ENCODE measurements at regions of chr2 and their contacts with region 1.

Region 1: DNA sequence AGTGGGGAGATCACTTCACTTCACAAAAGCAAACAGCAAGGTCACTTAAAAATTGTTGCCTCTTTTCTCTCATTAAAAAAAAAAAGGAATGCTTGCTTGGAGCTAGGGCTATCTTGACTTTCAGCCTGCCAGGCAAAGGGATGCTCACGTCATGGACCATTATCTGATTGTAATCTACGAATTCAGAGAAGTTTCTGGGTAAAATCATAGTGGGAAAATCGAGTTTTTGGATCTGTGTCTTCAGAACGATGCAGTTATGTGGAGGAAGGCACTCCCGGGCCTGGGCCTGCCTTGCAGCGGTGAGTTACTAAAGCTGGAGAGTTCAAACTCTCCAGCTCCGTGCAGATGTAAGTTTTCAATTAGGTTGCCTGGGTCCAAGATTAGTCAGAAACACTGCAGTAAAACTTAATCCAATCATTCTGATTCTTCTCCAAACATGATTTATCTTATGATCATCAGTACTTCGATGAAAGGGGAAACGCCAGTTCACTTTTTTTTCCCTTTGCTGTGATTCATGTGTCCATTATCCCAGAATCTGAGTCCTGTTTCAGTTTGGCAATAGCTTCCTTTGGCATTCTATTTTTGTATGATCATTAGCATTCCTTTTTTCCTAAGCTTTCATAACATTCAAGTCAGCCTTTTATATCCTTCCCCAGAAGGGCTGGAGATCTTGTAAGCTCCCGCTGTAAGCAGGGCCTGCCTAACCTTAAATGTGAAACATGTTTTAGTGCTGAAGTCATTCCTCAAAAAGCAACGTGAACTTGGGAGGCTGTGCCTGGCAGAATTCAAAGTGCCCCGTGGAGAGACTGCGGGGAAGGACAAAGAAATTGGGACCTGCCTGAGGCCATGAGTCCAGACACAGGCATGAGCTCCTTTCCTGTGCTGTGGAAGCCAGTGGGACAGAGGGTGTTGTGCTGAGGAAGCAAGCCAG is 119.3 kb upstream of the TWIST2 start:
- DNase-seq: peak; percentile 46 to 90
- H3K4me3 ChIP-seq: peak overlapping the region in 1 of 2 donors; percentile 28
- H3K27ac ChIP-seq: peak overlapping the region; percentile 97 to 98
- H3K4me1 ChIP-seq: peaks cover 4 to 36% of the 10 kb centered on the region in 2 donors
- H3K27me3 ChIP-seq: no peaks in the 10 kb centered on the region
- CTCF ChIP-seq: no peak

Region 2: DNA sequence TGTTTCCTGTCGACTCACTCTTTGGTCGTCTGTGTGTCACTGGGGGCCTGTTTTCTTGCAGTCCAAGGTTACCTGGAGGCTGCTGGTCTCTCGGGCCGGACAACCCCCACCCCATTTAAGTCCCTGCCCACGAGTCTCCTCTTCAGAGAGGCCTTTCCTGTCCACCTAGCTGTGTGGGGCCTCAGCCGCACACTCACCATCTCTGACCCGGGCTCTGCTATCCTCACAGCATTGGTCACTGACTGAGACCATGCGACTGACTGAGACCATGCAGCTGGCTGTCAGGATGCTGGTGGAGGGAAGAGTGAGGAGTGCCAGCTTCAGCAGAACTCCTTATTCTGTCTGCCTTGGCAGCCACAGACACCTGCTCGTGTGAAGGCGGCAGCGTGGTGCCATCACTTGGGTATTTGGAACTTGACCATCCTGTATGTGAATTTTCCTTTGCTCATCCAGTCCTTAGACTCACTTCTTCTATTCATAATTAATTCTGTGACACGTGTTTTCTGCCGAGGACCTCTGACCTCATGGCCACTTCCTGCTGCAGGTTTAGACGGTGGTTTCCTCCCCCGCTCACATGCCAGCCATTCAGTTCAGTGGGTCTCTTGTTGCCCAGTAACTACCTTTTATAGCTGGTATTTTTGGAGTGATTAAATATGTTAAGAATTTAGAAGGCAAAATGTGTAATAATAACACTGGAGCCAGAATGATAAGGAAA is 349.3 kb before region 1 on chr2:
- intact Hi-C with region 1: loop called (anchors 5 kb)
- DNase-seq: peak in 1 of 2 donors; percentile 79
- H3K4me3 ChIP-seq: no peak overlapping the region
- H3K27ac ChIP-seq: peak overlapping the region; percentile 55 to 84
- H3K4me1 ChIP-seq: peaks cover 12 to 28% of the 10 kb centered on the region in 2 donors
- H3K27me3 ChIP-seq: no peaks in the 10 kb centered on the region
- CTCF ChIP-seq: no peak

Region 3: GRCh38 chr2:238596571-238597551 is 131.7 kb before region 1 on chr2:
- intact Hi-C with region 1: loop called (anchors 1 kb)
- DNase-seq: peak; percentile 40 to 90
- H3K4me3 ChIP-seq: no peak overlapping the region
- H3K27ac ChIP-seq: peak overlapping the region; percentile 89 to 95
- H3K4me1 ChIP-seq: peaks cover 9 to 28% of the 10 kb centered on the region in 2 donors
- H3K27me3 ChIP-seq: no peaks in the 10 kb centered on the region
- CTCF ChIP-seq: no peak

Region 4: DNA sequence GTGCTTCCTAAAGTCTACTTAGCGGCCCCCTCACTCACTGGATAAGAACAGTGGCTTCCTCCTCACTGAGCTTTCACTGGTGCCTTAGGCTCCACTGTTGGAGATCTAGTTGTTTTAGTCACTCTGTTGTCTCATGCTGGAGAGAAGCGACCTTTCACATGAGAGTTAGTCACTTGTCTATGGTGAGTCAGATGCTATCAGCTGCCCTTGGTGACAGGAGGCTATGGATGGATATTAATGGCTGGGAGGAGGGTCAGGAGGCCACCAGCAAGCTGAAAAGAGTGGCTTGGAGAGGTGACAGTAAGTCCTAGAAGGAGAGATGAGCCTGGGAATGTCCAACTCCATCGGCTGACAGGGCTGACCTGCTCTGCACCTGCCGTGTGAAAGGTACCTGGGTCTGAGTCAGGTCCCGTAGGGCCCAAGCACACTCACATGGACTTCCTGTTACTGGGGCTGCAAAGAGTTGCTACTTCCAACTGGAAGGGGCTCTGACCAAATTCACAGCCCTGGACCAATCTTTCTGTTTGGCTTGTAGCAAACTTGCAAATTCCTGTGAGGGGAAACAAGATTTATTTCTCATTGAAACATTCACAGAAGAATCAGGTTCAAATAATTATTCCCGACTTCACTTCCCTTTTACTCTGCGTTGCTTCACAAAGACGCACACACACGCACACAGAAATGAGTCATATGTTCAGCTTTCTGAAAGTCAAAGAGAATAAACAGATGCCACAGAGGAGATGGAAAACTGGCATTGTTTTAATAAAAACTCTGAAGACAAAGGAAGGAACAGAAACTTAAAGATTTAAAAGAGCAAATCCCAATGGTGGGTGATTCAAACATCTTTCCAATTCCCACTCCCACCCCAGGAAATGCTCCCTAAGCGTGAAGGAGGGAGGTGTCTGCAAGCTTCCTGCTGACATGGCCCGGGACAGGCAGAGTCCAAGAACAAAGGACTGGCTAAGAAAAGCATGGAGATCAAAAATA is 84.2 kb before region 1 on chr2:
- intact Hi-C with region 1: loop called (anchors 5 kb)
- DNase-seq: no peak
- H3K4me3 ChIP-seq: no peak overlapping the region
- H3K27ac ChIP-seq: peak overlapping the region; percentile 49 to 54
- H3K4me1 ChIP-seq: peaks cover 0 to 22% of the 10 kb centered on the region in 2 donors
- H3K27me3 ChIP-seq: no peaks in the 10 kb centered on the region
- CTCF ChIP-seq: no peak

Region 5: DNA sequence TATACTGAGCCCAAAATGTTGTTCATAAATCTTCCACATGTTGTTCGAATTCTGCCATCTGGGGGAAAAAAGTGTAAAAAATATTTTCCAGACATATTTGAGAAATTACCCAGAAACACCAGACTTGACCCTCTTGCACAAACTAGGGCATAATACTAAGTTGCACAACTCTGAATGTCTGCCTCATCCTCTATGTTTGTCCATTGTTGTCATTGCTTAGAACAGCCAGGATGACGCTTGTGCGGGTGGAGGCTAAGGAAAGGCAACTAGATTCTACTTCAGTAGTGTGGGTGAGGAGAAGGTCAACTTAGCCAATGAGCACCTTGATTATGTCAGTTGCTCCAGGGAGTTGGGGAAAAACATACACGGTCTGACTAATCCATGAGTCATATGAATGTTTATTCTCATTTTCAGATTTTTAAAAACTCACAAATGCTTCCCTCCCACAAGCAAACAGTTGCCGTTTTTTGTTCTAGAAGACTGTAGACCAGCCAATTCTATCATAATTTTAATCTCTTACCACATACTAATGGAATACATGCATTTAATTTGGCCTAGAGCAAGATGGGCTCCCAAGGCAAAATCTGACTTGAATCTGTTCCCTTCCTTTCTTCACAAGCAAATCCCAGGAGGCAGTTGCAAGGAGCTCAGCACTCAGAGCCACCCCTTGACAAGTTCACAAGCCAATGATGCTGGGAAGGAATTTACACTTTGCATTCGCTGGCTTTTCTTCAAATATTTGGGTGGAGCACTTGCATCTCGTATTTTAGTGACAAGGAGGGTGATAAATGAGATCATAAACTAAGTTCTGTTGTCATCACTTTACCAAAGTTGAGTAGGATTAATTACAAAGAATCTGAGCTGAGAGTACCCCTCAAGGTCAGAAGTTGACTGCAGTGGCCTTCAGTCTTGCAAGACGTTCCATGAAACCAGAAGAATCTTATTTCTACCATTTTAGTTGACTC is 44.0 kb before region 1 on chr2:
- intact Hi-C with region 1: loop called (anchors 2 kb)
- DNase-seq: peak in 1 of 2 donors; percentile 87
- H3K4me3 ChIP-seq: no peak overlapping the region
- H3K27ac ChIP-seq: peak overlapping the region; percentile 73 to 77
- H3K4me1 ChIP-seq: peaks cover 0 to 11% of the 10 kb centered on the region in 2 donors
- H3K27me3 ChIP-seq: no peaks in the 10 kb centered on the region
- CTCF ChIP-seq: no peak

Region 6: GRCh38 chr2:240250985-240251847 is 1522.6 kb after region 1 on chr2:
- intact Hi-C with region 1: loop called (anchors 5 kb)
- DNase-seq: peak; percentile 93 to 98
- H3K4me3 ChIP-seq: peak overlapping the region in 1 of 2 donors; percentile 19
- H3K27ac ChIP-seq: peak overlapping the region; percentile 87 to 93
- H3K4me1 ChIP-seq: peaks cover 14 to 22% of the 10 kb centered on the region in 2 donors
- H3K27me3 ChIP-seq: no peaks in the 10 kb centered on the region
- CTCF ChIP-seq: no peak

Measured in ascending aorta (tissue), 2 donors.